Left colon (tissue), 2 donors: ENCODE measurements at regions of chr13 and their contacts with region 1.

Region 1: GRCh38 chr13:112643759-112644459 is 45.9 kb upstream of the ATP11A start:
- DNase-seq: peak in 1 of 2 donors; percentile 19
- ATAC-seq: peak; percentile 49

Region 2: GRCh38 chr13:112873851-112874750 is 230.2 kb after region 1 on chr13:
- intact Hi-C with region 1: loop called in 1 of 2 experiments (anchors 10 kb)
- DNase-seq: peak in 1 of 2 donors; percentile 76
- ATAC-seq: peak; percentile 68